B cell (primary cell): ENCODE measurements at regions of chr1 and their contacts with region 1.

Region 1: DNA sequence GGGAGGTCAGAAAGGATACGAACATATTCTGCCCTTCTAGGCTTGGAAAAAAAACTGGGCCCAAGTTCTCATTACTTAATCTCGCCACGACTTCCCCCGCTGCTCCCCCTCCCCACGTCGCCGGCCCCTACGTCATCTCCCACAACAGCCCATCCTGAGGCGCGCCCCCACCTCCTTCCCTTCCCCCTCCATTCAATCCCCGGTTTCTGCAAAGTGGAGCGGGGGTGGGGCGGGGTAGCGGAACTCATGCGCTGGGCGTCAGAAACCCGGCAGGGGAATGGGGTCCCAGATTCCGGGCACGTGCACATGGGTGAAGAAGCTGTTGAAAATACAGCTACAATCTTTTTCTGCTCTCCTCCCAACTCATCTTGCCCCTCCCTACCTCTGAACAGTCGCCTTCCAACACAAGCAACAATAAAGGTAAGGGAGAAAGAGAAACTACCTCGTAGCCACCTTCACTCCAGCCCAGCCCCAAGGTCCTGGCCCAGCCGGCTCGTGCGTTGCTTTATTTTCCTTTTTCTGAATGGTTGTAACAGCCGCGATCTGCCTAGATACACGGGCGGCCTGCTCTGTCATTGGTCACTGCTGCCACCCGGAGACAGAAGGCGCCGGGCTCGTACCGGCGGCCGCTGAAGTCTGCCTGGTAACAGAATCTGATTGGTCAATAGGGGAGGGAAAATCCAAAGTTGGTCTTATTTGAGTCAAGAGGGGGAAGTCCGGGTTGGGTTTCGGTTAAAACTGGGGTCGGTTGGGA is at the start of gene RFX5:
- DNase-seq: peak; percentile 99
- ATAC-seq: peak; percentile 91
- H3K4me3 ChIP-seq: peak within 1 kb of the TSS; percentile 81 to 95 (median 85)
- H3K4me3 Mint-ChIP-seq: peak within 1 kb of the TSS; percentile 92
- H3K27ac ChIP-seq: peak within 1 kb of the TSS; percentile 98 to 99
- H3K27ac Mint-ChIP-seq: peak within 1 kb of the TSS; percentile 97
- H3K4me1 ChIP-seq: peaks cover 34 to 44% of the 10 kb centered on the region in 2 donors
- H3K4me1 Mint-ChIP-seq: peaks cover 49% of the 10 kb centered on the region
- H3K27me3 ChIP-seq: no peaks in the 10 kb centered on the region
- H3K27me3 Mint-ChIP-seq: no peaks in the 10 kb centered on the region
- CTCF ChIP-seq: no peak
- total RNA-seq, gene RFX5: 207 and 208 TPM in 2 replicates

Region 2: GRCh38 chr1:151189638-151190445 is 157.1 kb before region 1 on chr1 and contains the start of gene VPS72:
- CTCF ChIA-PET with region 1: no interaction called
- POLR2A ChIA-PET with region 1: no interaction called
- intact Hi-C with region 1: loop called (anchors 2 kb)
- DNase-seq: peak; percentile 91
- ATAC-seq: peak; percentile 91
- H3K4me3 ChIP-seq: peak within 1 kb of the TSS; percentile 55 to 92 (median 86)
- H3K4me3 Mint-ChIP-seq: peak within 1 kb of the TSS; percentile 96
- H3K27ac ChIP-seq: peak within 1 kb of the TSS; percentile 75 to 91
- H3K27ac Mint-ChIP-seq: peak within 1 kb of the TSS; percentile 95
- H3K4me1 ChIP-seq: peaks cover 13 to 22% of the 10 kb centered on the region in 2 donors
- H3K4me1 Mint-ChIP-seq: peaks cover 26% of the 10 kb centered on the region
- H3K27me3 ChIP-seq: no peaks in the 10 kb centered on the region
- H3K27me3 Mint-ChIP-seq: no peaks in the 10 kb centered on the region
- CTCF ChIP-seq: no peak
- total RNA-seq, gene VPS72: 48.7 and 71.3 TPM in 2 replicates

Region 3: GRCh38 chr1:151198255-151199127 is 148.5 kb before region 1 on chr1 and contains the start of gene PIP5K1A:
- CTCF ChIA-PET with region 1: no interaction called
- POLR2A ChIA-PET with region 1: interaction called, 3 read pairs
- intact Hi-C with region 1: loop called (anchors 2 kb)
- DNase-seq: peak; percentile 98
- ATAC-seq: peak; percentile 98
- H3K4me3 ChIP-seq: peak within 1 kb of the TSS; percentile 82 to 96 (median 95)
- H3K4me3 Mint-ChIP-seq: peak within 1 kb of the TSS; percentile 98
- H3K27ac ChIP-seq: peak within 1 kb of the TSS; percentile 87 to 90
- H3K27ac Mint-ChIP-seq: peak within 1 kb of the TSS; percentile 94
- H3K4me1 ChIP-seq: peaks cover 21 to 29% of the 10 kb centered on the region in 2 donors
- H3K4me1 Mint-ChIP-seq: peaks cover 47% of the 10 kb centered on the region
- H3K27me3 ChIP-seq: peaks cover 0 to 2% (median 0%) of the 10 kb centered on the region in 4 experiments
- H3K27me3 Mint-ChIP-seq: no peaks in the 10 kb centered on the region
- CTCF ChIP-seq: no peak
- total RNA-seq, gene PIP5K1A: 76.1 and 78.4 TPM in 2 replicates

Region 4: GRCh38 chr1:151254217-151255213 is 92.4 kb before region 1 on chr1 and contains the start of gene PSMD4:
- CTCF ChIA-PET with region 1: no interaction called
- POLR2A ChIA-PET with region 1: no interaction called
- intact Hi-C with region 1: loop called (anchors 1 kb)
- DNase-seq: peak; percentile 96
- ATAC-seq: peak; percentile 93
- H3K4me3 ChIP-seq: peak within 1 kb of the TSS; percentile 82 to 97 (median 84)
- H3K4me3 Mint-ChIP-seq: peak within 1 kb of the TSS; percentile 97
- H3K27ac ChIP-seq: peak within 1 kb of the TSS; percentile 66 to 85
- H3K27ac Mint-ChIP-seq: peak within 1 kb of the TSS; percentile 97
- H3K4me1 ChIP-seq: peaks cover 9 to 12% of the 10 kb centered on the region in 2 donors
- H3K4me1 Mint-ChIP-seq: peaks cover 30% of the 10 kb centered on the region
- H3K27me3 ChIP-seq: no peaks in the 10 kb centered on the region
- H3K27me3 Mint-ChIP-seq: no peaks in the 10 kb centered on the region
- CTCF ChIP-seq: no peak
- total RNA-seq, gene PSMD4: 142 and 169 TPM in 2 replicates

Region 5: GRCh38 chr1:151327223-151327902 is 19.6 kb before region 1 on chr1 and contains the start of gene PI4KB:
- CTCF ChIA-PET with region 1: interaction called, 148 read pairs
- POLR2A ChIA-PET with region 1: interaction called, 11 read pairs
- intact Hi-C with region 1: loop called (anchors 1 kb)
- DNase-seq: peak; percentile 97
- ATAC-seq: peak; percentile 93
- H3K4me3 ChIP-seq: peak within 1 kb of the TSS; percentile 72 to 99 (median 90)
- H3K4me3 Mint-ChIP-seq: peak within 1 kb of the TSS; percentile 93
- H3K27ac ChIP-seq: peak within 1 kb of the TSS; percentile 87 to 89
- H3K27ac Mint-ChIP-seq: peak within 1 kb of the TSS; percentile 96
- H3K4me1 ChIP-seq: peaks cover 21 to 26% of the 10 kb centered on the region in 2 donors
- H3K4me1 Mint-ChIP-seq: peaks cover 40% of the 10 kb centered on the region
- H3K27me3 ChIP-seq: no peaks in the 10 kb centered on the region
- H3K27me3 Mint-ChIP-seq: no peaks in the 10 kb centered on the region
- CTCF ChIP-seq: no peak
- total RNA-seq, gene PI4KB: 110 TPM in 2 replicates

Region 6: DNA sequence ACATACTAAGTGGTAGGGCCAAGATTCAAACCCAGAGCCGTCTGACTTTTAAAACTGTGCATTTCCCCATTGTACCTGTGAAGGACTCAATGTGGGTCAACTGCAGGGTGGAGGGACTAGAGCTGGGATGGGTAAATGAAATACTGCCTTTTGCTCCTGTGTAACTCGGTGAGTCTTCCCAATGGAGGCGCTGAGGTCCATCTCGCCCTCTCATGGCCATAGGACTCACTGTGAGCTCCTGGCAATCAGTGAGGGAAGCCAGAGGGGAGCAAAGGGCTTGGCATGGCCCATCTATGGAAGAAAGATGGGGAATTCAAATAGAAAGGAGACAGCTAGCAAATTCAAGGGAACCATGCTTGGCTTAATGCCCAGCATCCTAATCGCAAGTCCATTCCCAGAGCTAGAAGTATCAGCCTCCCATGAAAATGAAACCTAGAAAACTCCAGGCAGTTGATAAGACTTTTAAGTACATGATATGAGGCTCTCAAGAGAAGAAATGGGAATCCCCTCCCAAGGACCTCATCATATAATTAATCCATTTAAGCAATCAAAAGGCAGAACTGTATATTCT is 138.8 kb after region 1 on chr1:
- CTCF ChIA-PET with region 1: no interaction called
- POLR2A ChIA-PET with region 1: no interaction called
- intact Hi-C with region 1: no loop called
- DNase-seq: no peak
- ATAC-seq: no peak
- H3K4me3 ChIP-seq: no peak overlapping the region
- H3K4me3 Mint-ChIP-seq: no peak overlapping the region
- H3K27ac ChIP-seq: no peak overlapping the region
- H3K27ac Mint-ChIP-seq: no peak overlapping the region
- H3K4me1 ChIP-seq: no peaks in the 10 kb centered on the region
- H3K4me1 Mint-ChIP-seq: no peaks in the 10 kb centered on the region
- H3K27me3 ChIP-seq: no peaks in the 10 kb centered on the region
- H3K27me3 Mint-ChIP-seq: peaks cover 6% of the 10 kb centered on the region
- CTCF ChIP-seq: no peak

Region 7: GRCh38 chr1:151611832-151612500 is 265.0 kb after region 1 on chr1 and contains the start of gene SNX27:
- CTCF ChIA-PET with region 1: no interaction called
- POLR2A ChIA-PET with region 1: no interaction called
- intact Hi-C with region 1: loop called (anchors 5 kb)
- DNase-seq: peak; percentile 94
- ATAC-seq: peak; percentile 96
- H3K4me3 ChIP-seq: peak within 1 kb of the TSS; percentile 52 to 94 (median 84)
- H3K4me3 Mint-ChIP-seq: peak within 1 kb of the TSS; percentile 91
- H3K27ac ChIP-seq: peak within 1 kb of the TSS in 1 of 2 donors; percentile 79
- H3K27ac Mint-ChIP-seq: peak within 1 kb of the TSS; percentile 94
- H3K4me1 ChIP-seq: peaks cover 11 to 18% of the 10 kb centered on the region in 2 donors
- H3K4me1 Mint-ChIP-seq: peaks cover 32% of the 10 kb centered on the region
- H3K27me3 ChIP-seq: peaks cover 0 to 3% (median 1%) of the 10 kb centered on the region in 4 experiments
- H3K27me3 Mint-ChIP-seq: peaks cover 5% of the 10 kb centered on the region
- CTCF ChIP-seq: no peak
- total RNA-seq, gene SNX27: 43.2 and 45.6 TPM in 2 replicates